Sigmoid colon (tissue), 7 donors: ENCODE measurements at regions of chr9 and their contacts with region 1.

Region 1: DNA sequence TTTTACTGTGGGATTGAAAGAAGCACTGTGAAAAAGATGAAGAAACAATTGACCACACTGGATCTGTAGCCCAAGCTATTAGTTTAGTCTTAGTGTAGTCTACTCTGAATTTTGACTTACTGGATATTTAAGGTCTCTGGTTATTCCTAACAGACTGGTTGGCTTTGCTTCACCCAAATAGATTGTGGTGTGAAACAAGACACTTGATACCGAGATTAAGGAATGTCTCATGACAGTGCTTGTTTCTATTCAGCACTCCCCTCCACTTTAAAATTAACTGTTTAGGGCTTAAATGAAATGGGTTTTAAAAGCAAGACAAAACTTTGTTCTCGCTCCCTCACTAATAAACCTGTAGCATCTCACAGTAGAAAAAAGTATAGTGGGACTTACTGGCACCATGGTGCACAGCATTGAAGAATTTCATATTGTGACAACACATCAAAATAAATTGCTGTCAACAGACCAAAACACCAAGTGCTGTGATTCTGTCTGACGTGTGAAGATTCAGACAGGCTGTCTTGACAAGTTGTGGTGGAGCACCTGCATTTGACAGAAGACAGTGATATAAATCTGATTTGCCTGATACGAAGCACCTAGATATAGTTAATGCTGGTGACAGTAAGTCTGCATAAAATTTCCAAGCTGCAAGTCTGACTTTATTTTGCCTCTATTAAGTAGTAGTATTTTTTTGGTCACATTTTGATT is 73.1 kb downstream of the PBX3 start:
- DNase-seq: no peak
- H3K4me3 ChIP-seq: peak overlapping the region in 3 of 4 donors; percentile 8 to 35 (median 25)
- H3K27ac ChIP-seq: peak overlapping the region in 3 of 4 donors; percentile 59 to 77 (median 73)
- H3K4me1 ChIP-seq: peaks cover 0 to 58% (median 35%) of the 10 kb centered on the region in 4 donors
- H3K27me3 ChIP-seq: no peaks in the 10 kb centered on the region
- CTCF ChIP-seq: no peak
- EP300 ChIP-seq: no peak
- POLR2A ChIP-seq: no peak

Region 2: DNA sequence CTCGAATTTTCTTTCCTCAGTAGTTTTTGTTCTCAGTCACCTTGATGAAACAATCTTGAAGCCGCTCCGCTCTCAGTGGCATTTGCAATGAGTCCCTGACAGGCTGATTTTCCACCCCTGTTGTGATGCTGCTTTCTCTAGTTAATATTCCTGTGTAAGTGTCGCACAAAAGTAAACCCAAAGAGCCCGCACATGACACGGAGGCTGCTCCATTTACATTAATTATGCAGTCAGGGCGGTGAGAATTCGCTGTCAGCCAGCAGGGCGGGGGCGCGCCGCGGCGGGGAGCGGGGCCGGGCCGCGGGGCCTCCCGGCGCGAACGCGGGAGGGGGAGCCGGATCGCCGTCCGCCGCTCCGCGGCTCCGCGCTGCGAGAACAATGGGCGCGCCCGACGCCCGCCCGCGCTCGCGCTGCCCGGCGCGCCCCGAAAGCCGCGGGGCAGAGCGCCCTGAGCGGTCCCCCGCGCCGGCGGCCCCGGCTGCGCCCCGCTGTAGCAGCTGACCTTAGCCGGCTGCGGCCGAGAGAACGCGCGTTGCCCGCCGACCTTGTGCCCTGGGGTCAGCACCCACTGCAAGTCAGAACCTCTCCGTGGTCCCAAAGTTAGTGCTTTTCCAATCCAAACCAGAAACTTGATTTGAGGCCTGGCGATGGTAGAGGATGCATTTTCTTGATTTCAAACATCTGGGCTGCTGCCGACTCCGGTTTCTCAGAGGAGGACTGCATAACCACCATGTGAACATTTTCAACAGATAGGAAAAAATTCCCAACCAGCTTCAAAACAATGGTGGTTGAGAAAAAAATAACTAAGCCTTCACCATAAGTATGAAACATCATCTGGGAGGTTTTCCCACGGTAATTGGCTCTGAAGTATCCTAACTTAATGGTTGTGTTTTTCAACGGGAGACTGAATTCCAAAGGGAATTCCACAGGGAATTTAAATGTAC is 69.5 kb after region 1 on chr9:
- intact Hi-C with region 1: loop called (anchors 5 kb)
- DNase-seq: peak; percentile 61
- H3K4me3 ChIP-seq: peak overlapping the region; percentile 41 to 56 (median 51)
- H3K27ac ChIP-seq: peak overlapping the region; percentile 75 to 86 (median 83)
- H3K4me1 ChIP-seq: peaks cover 0 to 91% (median 62%) of the 10 kb centered on the region in 4 donors
- H3K27me3 ChIP-seq: no peaks in the 10 kb centered on the region
- CTCF ChIP-seq: no peak
- EP300 ChIP-seq: no peak
- POLR2A ChIP-seq: no peak